ENCODE measurements at regions of chr14 and their contacts with region 1.

Region 1: GRCh38 chr14:75821831-75822521 is 159.8 kb downstream of the TGFB3 start:
- DNase-seq: no peak
- ATAC-seq: no peak
- H3K4me3 ChIP-seq: no peak overlapping the region
- H3K27ac ChIP-seq: no peak overlapping the region
- H3K4me1 ChIP-seq: no peaks in the 10 kb centered on the region; the same call in 1 of the 2 replicates
- H3K27me3 ChIP-seq: no peaks in the 10 kb centered on the region
- CTCF ChIP-seq: no peak

Region 2: GRCh38 chr14:75636100-75636692 is 185.8 kb before region 1 on chr14:
- CTCF ChIA-PET with region 1: no interaction called
- POLR2A ChIA-PET with region 1: no interaction called
- in situ Hi-C with region 1: no loop called
- intact Hi-C with region 1: no loop called
- DNase-seq: no peak
- ATAC-seq: no peak
- H3K4me3 ChIP-seq: no peak overlapping the region
- H3K27ac ChIP-seq: no peak overlapping the region
- H3K4me1 ChIP-seq: no peaks in the 10 kb centered on the region
- H3K27me3 ChIP-seq: no peaks in the 10 kb centered on the region
- CTCF ChIP-seq: no peak

Region 3: DNA sequence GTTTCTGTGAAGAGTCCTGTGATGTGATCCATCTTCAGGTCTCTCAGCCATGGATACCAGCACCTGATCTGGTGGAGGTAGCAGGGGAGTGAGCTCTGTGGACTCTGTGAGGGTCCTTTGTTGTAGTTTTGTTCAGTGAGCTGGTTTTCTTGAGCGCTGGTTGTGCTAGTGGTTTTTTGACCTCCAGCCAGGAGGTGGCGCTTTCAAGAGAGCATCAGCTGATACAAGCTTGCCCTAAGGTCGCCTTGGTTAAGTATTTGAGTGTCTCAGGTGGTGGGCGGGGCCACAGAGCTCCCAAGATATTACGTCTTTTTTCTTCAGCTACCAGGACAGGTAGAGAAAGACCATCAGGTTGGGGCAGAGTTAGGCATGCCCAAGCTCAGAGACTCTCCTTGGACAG is 21.2 kb before region 1 on chr14:
- CTCF ChIA-PET with region 1: interaction called, 12 read pairs
- POLR2A ChIA-PET with region 1: no interaction called
- in situ Hi-C with region 1: no loop called
- intact Hi-C with region 1: no loop called
- DNase-seq: no peak
- ATAC-seq: no peak
- H3K4me3 ChIP-seq: no peak overlapping the region
- H3K27ac ChIP-seq: no peak overlapping the region
- H3K4me1 ChIP-seq: no peaks in the 10 kb centered on the region
- H3K27me3 ChIP-seq: no peaks in the 10 kb centered on the region
- CTCF ChIP-seq: peak; percentile 32